Activated CD4-positive, alpha-beta memory T cell treated with anti-CD3 and anti-CD28 coated beads for 36 hours (primary cell): ENCODE measurements at regions of chr6 and their contacts with region 1.

Region 1: DNA sequence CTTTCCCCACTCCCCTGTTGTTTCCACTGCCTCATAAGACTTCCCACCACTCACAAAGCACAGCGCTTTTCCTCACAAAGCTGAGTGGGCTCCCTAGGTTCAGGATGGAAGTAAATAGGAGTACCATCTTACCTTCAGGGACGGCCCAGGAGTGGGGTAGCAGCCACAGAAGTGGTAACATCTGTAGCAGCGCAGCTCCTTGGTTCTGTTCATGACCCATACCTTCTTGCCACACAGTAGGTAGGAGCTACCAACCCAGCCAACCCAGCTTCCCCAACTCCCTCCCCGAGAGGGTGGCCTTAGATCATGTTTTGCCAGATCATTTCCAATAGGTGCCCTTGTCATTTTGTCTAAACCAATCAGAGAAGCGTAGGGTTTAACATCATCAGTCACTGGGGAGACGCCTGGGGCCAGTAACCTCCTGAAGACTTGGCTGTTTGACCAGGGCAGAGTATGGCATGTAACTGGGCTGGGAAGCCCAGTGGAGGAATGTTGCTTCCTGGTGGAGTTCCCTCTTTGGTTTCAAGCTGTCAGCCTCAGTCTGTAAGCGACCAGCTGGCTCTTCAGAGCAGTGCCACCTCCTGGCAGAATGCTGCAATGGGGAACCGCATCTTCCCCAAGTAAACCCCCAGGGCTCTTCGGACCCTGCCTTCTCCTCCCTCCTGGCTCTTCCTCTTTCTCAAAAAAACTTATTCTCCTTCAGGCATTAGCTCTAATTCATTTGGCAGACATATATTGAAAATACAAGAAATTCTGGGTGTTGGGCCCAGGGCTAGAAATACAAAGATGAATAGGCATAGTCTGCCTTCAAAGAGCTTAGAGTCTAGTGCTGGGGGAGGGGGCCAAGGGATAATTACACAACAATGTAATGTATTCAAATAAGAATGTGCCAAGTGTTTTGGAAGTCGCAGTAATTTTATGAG is at the start of gene HLA-DMA:
- DNase-seq: peak; percentile 83
- H3K4me3 Mint-ChIP-seq: peak within 1 kb of the TSS; percentile 64
- H3K27ac Mint-ChIP-seq: peak within 1 kb of the TSS; percentile 39
- H3K4me1 Mint-ChIP-seq: peaks cover 51% of the 10 kb centered on the region
- H3K27me3 Mint-ChIP-seq: no peaks in the 10 kb centered on the region
- total RNA-seq, gene HLA-DMA: 9.6 to 10.2 TPM

Region 2: DNA sequence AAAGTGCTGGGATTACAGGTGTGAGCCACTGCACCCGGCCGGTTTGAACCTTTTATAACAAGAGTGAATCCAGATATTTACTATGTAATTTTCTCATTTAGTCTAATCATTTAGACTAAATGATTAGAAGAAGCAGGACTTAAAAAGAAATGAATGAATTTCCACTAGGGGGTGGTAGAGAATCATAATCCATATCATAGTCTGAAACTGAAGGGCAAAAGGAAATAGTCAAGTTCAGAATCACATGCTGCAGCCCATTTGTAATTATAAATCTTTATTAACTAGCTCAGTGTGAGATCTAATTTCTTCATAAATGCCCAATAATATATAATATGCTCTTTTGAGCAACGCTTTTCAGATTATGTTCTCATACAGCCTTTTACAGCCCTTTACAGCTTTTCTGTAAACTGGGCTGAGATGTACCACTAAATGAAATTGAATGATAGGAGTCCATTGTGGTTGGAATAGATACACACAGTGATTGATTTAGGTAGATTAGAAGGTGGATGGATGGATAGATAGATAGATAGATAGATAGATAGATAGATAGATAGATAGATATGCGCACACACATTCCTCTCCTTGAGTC is 67.3 kb before region 1 on chr6:
- CTCF ChIA-PET with region 1: interaction called, 53 read pairs
- POLR2A ChIA-PET with region 1: no interaction called
- intact Hi-C with region 1: loop called (anchors 2 kb)
- DNase-seq: no peak
- H3K4me3 Mint-ChIP-seq: no peak overlapping the region
- H3K27ac Mint-ChIP-seq: no peak overlapping the region
- H3K4me1 Mint-ChIP-seq: peaks cover 11% of the 10 kb centered on the region
- H3K27me3 Mint-ChIP-seq: no peaks in the 10 kb centered on the region

Region 3: DNA sequence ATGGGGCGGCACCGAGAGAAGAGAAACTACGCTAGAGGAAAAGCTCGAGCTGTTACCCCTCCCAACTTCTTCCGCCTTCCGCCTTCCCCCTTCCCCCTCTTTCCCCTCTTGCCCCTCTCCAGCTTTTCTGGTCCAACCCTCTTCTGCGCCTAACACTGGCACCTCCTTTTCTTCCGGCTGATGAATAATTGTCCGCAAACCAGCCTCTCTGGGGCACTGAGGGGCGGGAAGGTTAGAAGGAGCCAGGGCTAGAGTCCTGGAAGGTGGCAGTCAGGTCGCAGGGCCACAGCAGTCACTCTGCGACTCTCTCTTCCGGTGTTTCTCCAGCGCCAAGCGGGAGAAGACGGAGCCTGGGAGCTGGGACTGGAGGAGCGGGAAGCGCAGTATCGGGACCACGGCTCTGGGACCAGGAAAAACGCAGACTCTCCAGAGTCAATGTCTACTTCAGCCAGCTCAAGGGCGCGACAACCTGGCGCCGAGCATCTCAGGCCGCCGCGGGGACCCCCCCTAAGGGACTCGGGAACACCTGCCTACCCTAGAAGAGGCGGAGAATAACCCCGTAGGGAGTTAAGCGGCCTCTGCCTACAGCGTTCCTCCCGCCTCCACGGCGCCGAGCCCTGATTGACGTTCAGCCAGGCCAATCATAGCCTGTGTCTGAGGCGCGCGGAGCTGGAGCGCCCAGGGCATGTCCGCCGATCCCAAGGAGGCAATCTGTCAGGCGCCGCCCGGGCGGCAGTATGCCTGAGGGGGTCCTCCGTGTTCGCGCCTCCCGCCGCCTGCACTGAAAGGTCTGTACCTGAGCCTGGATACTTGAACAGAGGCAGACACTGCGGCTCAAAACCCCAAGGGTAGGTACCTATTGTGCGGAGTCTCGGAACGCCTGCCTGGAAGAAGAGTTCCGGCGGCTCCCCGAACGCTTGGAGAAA is 58.7 kb before region 1 on chr6:
- CTCF ChIA-PET with region 1: interaction called, 53 read pairs
- POLR2A ChIA-PET with region 1: interaction called, 4 read pairs
- intact Hi-C with region 1: loop called (anchors 2 kb)
- DNase-seq: peak; percentile 97
- H3K4me3 Mint-ChIP-seq: peak overlapping the region; percentile 98
- H3K27ac Mint-ChIP-seq: peak overlapping the region; percentile 94
- H3K4me1 Mint-ChIP-seq: peaks cover 35% of the 10 kb centered on the region
- H3K27me3 Mint-ChIP-seq: no peaks in the 10 kb centered on the region

Region 4: GRCh38 chr6:32940656-32941213 is 12.3 kb before region 1 on chr6 and contains the start of gene HLA-DMB:
- CTCF ChIA-PET with region 1: interaction called, 216 read pairs
- POLR2A ChIA-PET with region 1: interaction called, 11 read pairs
- intact Hi-C with region 1: loop called (anchors 1 kb)
- DNase-seq: peak; percentile 52
- H3K4me3 Mint-ChIP-seq: peak within 1 kb of the TSS; percentile 77
- H3K27ac Mint-ChIP-seq: peak within 1 kb of the TSS; percentile 87
- H3K4me1 Mint-ChIP-seq: peaks cover 59% of the 10 kb centered on the region
- H3K27me3 Mint-ChIP-seq: no peaks in the 10 kb centered on the region
- total RNA-seq, gene HLA-DMB: 1.6 to 1.9 TPM